HEK293 (cell line): ENCODE measurements at regions of chr15 and their contacts with region 1.

Region 1: GRCh38 chr15:73127301-73127936 is 75.2 kb downstream of the NEO1 start:
- H3K4me3 ChIP-seq: no peak overlapping the region
- H3K27ac ChIP-seq: no peak overlapping the region
- H3K4me1 ChIP-seq: no peaks in the 10 kb centered on the region
- CTCF ChIP-seq: peak; percentile 75

Region 2: DNA sequence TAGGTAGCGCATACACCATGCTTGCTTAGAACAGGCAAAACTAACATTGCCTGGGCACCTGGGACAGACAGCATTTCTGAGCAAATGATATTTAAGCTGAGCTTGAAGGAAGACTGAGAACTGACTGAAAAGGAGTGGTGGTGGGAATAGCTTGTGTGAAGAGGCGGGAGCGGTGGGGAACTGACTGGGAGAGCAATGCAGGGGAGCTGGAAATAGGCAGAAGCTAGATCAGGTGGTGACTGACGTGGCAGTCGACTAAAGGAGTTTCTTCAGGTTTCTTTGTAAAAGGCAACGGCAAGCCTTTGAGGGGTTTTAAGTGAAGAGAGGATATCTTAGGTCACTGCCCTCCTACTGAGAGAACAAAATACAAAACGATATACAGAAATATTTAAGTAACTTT is 13.4 kb before region 1 on chr15:
- CTCF ChIA-PET with region 1: interaction called, 11 read pairs
- POLR2A ChIA-PET with region 1: no interaction called
- H3K4me3 ChIP-seq: no peak overlapping the region
- H3K27ac ChIP-seq: no peak overlapping the region
- H3K4me1 ChIP-seq: peaks cover 20% of the 10 kb centered on the region
- CTCF ChIP-seq: no peak

Region 3: DNA sequence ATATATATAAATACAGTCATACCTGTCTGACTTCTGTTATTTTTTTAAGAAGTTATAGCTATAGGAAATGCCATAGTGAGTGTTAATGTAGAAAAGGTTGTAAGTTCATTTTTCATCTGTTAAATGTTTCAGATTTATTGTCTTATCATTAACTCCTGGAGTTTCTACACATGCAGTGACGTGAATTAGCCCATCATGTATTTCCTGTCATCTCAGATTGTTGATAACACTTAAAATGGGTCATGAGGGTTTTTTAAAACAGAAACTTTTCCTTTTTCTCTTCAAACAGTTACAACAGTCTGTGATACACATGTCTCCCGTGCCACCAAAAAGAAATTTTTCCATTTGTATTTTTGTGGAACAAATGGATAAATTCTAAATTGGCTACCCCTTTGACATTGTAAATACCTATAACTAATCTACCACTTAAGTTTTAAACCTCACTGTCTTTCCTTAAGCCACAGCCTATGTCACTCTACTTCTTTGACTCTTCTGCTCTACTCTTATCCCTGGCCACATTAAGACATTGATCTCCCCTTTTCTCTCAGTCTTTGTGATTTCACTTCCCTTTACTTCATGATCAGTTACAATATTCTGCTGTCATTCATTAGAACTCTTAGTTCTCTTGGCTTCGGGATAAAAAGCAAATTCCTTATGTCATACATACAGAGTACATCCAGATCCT is 13.9 kb after region 1 on chr15:
- CTCF ChIA-PET with region 1: interaction called, 12 read pairs
- POLR2A ChIA-PET with region 1: no interaction called
- H3K4me3 ChIP-seq: no peak overlapping the region
- H3K27ac ChIP-seq: no peak overlapping the region
- H3K4me1 ChIP-seq: no peaks in the 10 kb centered on the region
- CTCF ChIP-seq: no peak

Region 4: DNA sequence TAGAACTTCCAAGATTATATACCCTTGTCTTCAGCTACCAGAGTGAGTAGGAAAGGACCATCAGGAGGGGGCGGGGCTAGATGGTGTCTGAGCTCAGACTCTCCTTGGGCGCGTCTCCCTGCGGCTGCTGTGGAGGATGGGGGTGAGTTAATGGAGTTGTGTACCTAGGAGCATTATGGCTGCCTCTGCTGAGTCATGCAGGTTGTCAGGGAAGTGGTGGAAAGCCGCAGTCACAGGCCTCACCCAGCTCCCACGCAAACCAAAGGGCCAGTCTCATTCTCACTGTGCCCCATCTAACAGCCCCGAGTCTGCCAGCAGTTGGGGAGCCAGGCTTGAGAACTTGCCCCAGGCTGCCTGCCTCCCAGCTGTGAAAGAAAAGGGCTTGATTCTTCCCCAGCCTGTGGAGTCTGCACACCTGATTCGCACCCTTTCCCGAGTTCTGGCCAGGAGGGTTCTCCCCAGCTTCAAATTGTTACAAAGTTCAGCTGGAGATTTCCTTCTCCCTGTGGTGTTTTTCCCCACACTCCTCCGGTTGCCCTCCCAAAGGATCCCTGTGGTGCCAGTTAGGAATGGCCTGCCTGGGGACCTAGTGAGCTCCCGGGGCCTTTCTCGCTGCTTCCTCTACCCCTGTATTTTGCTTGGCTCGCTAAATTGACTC is 98.1 kb after region 1 on chr15:
- CTCF ChIA-PET with region 1: no interaction called
- POLR2A ChIA-PET with region 1: no interaction called
- H3K4me3 ChIP-seq: no peak overlapping the region
- H3K27ac ChIP-seq: no peak overlapping the region
- H3K4me1 ChIP-seq: no peaks in the 10 kb centered on the region
- CTCF ChIP-seq: no peak

Region 5: DNA sequence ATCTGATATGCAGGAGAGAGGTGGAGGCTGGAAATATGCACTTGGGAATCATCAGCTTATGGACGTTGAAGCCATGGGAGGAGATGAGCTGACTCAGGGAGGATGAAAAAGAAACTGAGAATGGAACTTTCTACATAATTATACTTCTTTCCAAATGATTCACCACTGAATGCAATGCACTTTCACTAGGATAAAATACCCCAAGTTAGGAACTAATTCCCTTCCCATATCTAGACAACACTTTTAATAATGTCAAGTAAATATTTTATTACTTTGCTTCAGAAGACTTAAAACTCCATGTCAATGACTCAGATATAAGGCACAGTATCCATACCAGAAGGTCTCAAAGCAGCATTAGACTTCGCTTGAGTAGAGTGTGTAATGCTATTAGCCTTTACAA is 481.5 kb after region 1 on chr15:
- CTCF ChIA-PET with region 1: no interaction called
- POLR2A ChIA-PET with region 1: no interaction called
- H3K4me3 ChIP-seq: no peak overlapping the region
- H3K27ac ChIP-seq: no peak overlapping the region
- H3K4me1 ChIP-seq: peaks cover 12% of the 10 kb centered on the region
- CTCF ChIP-seq: no peak